GM12878 (cell line): ENCODE measurements at regions of chr19 and their contacts with region 1.

Region 1: DNA sequence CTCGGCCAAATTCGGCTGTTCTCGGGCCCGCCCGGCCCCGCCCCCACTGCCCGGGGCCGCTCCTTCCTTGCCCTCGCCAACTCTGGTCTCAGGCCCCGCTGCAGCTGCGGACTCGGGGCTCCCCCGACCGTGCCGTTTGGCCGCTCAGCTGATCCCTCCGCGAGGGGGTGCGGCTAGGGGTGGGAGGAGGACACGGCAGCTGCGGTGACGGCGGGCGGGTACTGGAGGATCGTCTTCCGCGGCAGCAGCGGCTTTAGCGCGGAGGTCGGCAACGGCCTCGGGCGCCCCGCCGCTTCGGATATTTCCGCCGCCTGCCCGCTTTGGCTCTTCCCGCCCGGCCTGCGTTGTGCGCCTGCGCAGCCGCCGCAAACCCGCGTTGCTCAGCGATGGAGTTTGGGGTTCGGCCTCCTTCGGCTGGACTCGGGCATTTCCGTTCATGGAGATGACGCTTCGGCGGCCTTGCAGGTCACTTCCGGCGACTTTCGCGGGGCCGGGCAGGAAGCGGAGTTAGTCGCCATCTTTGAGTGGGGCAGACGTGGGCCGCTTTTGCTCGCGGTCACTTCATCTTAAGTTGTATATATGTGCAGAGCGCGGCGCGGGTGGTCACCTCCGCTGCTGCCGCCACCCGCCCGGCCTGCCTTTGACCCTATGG is 338 bp upstream of the UBE2M start:
- DNase-seq: peak; percentile 95
- ATAC-seq: peak; percentile 72
- H3K4me3 ChIP-seq: peak overlapping the region; percentile 89
- H3K27ac ChIP-seq: peak overlapping the region; percentile 96
- H3K4me1 ChIP-seq: peaks cover 50% of the 10 kb centered on the region
- H3K27me3 ChIP-seq: no peaks in the 10 kb centered on the region
- CTCF ChIP-seq: no peak
- EP300 ChIP-seq: no peak
- POLR2A ChIP-seq: peak; percentile 83
- RAD21 ChIP-seq: no peak

Region 2: GRCh38 chr19:57719901-57720519 is 838.7 kb before region 1 on chr19:
- CTCF ChIA-PET with region 1: no interaction called
- POLR2A ChIA-PET with region 1: no interaction called
- RAD21 ChIA-PET with region 1: no interaction called
- SMC1A ChIA-PET with region 1: no interaction called
- in situ Hi-C with region 1: no loop called
- intact Hi-C with region 1: no loop called
- DNase-seq: no peak
- ATAC-seq: no peak
- H3K4me3 ChIP-seq: no peak overlapping the region
- H3K27ac ChIP-seq: no peak overlapping the region
- H3K4me1 ChIP-seq: no peaks in the 10 kb centered on the region
- H3K27me3 ChIP-seq: no peaks in the 10 kb centered on the region
- CTCF ChIP-seq: no peak
- EP300 ChIP-seq: no peak
- POLR2A ChIP-seq: no peak
- RAD21 ChIP-seq: no peak

Region 3: GRCh38 chr19:58372311-58373133 is 186.2 kb before region 1 on chr19:
- CTCF ChIA-PET with region 1: no interaction called
- POLR2A ChIA-PET with region 1: no interaction called
- RAD21 ChIA-PET with region 1: no interaction called
- SMC1A ChIA-PET with region 1: no interaction called
- in situ Hi-C with region 1: no loop called
- intact Hi-C with region 1: no loop called
- DNase-seq: no peak
- ATAC-seq: no peak
- H3K4me3 ChIP-seq: no peak overlapping the region
- H3K27ac ChIP-seq: no peak overlapping the region
- H3K4me1 ChIP-seq: no peaks in the 10 kb centered on the region
- H3K27me3 ChIP-seq: no peaks in the 10 kb centered on the region
- CTCF ChIP-seq: 0 out of 6 replicates have a peak, but pooled peaks of 2 of the 3 experiments have one; percentile 5
- EP300 ChIP-seq: no peak
- POLR2A ChIP-seq: no peak
- RAD21 ChIP-seq: no peak

Region 4: DNA sequence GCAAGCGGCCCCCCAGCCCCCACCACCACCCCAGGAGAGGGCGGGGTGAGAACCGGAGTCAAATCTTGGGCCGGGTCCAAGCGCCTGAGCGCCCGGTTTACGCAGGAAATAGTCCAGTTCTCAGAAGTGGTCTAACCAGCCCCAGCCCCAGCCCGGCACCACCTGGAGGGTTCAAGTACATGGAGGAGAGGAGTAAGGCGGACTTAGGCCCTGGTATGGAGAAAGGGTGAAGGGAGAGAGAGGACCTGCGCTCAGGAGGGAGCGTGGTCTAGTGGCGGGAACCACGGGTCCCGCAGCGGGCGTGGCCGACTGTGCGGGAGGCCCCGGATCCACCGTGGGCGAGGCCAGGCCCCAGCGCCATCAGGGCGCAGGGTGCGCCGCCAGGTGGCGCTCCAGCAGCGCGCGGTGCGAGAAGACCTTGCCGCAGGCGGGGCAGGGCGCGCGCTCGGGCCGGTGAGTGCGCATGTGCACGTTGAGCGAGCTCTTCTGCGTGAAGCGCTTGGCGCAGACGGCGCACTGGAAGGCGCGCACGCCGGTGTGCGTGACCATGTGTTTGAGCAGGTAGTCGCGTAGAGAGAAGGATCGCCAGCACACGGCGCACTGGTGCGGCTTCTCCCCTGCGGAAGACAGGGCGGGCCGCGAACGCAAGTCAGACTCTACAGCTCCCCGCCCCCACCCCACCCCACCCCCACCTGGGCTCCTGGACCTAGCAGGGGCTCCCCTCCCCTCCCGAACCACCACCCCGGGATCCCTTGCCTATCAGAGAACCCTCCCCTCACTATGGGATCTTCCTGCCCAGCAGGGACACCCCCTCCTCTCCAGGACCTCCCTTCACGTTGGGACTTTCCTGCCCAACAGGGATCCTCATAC is 44.8 kb before region 1 on chr19:
- CTCF ChIA-PET with region 1: interaction called, 37 read pairs
- POLR2A ChIA-PET with region 1: interaction called, 16 read pairs
- RAD21 ChIA-PET with region 1: interaction called, 4 read pairs
- SMC1A ChIA-PET with region 1: no interaction called
- in situ Hi-C with region 1: no loop called
- intact Hi-C with region 1: loop called (anchors 2 kb)
- DNase-seq: peak; percentile 85
- ATAC-seq: peak; percentile 95
- H3K4me3 ChIP-seq: peak overlapping the region; percentile 72
- H3K27ac ChIP-seq: peak overlapping the region; percentile 91
- H3K4me1 ChIP-seq: peaks cover 23% of the 10 kb centered on the region
- H3K27me3 ChIP-seq: no peaks in the 10 kb centered on the region
- CTCF ChIP-seq: peak; percentile 80 to 99 (median 98); a peak in 5 of 6 replicates
- EP300 ChIP-seq: no peak
- POLR2A ChIP-seq: peak; percentile 88
- RAD21 ChIP-seq: peak; percentile 66

Region 5: DNA sequence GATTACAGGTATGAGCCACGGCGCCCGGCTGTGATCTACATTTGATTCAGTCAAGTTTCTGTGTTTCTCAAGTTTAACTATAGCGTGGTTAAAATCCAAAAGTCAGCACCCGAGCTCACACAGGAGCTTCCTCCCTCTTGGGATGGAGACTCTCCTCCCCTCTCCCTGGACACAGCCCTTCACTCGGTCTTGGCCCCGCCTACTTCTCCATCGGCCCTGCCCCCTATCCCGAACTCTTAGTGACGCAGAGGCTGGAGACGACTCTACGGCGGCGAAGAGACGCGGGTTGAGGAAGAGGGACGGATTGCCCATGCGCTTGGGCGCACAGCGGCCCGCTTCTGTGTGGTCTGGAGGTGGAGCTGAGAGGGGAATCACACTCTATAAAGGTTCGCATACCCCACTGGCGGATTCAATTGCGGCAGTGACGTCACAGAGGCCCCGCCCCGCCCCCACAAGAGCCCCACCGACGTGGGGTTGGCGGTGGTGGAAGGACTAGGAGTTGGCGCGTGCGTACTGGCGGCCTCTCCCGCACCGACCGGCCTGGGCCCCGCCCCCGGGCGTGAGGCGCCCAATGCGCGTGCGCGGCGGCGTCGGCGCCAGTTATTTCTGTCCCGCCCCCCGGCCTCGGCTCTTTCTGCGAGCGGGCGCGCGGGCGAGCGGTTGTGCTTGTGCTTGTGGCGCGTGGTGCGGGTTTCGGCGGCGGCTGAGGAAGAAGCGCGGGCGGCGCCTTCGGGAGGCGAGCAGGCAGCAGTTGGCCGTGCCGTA is 14.7 kb before region 1 on chr19 and contains the start of gene TRIM28:
- CTCF ChIA-PET with region 1: no interaction called
- POLR2A ChIA-PET with region 1: interaction called, 41 read pairs
- RAD21 ChIA-PET with region 1: interaction called, 9 read pairs
- SMC1A ChIA-PET with region 1: interaction called, 9 read pairs
- in situ Hi-C with region 1: no loop called
- intact Hi-C with region 1: loop called (anchors 1 kb)
- DNase-seq: peak; percentile 96
- ATAC-seq: peak; percentile 99
- H3K4me3 ChIP-seq: peak within 1 kb of the TSS; percentile 92
- H3K27ac ChIP-seq: peak within 1 kb of the TSS; percentile 89
- H3K4me1 ChIP-seq: peaks cover 8% of the 10 kb centered on the region
- H3K27me3 ChIP-seq: no peaks in the 10 kb centered on the region; a peak in 1 of 4 replicates
- CTCF ChIP-seq: no peak
- EP300 ChIP-seq: peak in 1 of 2 experiments; percentile 39; a peak in 1 of 4 replicates
- POLR2A ChIP-seq: peak; percentile 99
- RAD21 ChIP-seq: no peak
- polyA plus RNA-seq, gene TRIM28: 5.0 to 32.5 TPM

Region 6: DNA sequence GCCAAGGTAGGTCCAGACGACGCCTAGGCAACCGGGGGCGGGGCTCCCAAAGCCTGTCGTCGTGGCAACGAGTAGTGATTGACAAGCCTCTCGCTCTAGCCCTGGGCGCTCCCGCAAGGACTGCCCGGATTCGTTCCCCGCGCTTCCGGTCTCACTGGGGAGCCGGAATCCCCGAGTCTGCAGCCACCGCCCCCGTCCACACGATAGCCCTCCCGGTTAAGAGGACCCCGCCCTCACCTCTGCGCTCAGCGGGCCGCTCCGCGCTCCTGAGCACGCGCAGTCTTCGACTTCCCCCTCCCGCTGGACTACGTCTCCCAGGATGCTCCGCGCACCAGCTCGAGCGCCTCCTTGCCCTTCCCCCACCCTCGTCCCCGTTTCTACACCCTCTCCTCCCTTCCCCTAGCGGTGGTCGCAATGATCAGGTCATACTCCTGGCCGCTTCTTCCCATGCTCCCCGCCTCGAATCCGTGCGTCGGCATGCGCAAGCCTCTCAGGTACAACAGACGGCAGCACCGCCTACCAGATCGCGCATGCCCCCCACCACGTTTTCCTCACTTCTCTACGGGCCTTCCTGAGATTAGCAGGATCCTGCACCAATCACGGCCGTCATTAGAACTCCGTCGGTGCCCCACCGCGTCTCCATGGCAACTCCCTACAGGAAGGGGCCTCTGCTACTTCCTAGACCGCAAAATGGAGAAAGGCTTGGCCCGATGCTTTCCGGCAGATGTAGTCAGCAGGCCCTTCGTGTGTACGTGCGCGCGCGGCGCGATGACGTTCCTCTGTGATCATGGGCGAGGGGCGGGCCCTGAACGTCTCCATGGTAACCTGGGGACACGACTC is 14.3 kb after region 1 on chr19 and contains the start of gene MZF1:
- CTCF ChIA-PET with region 1: interaction called, 7 read pairs
- POLR2A ChIA-PET with region 1: interaction called, 46 read pairs
- RAD21 ChIA-PET with region 1: interaction called, 5 read pairs
- SMC1A ChIA-PET with region 1: interaction called, 11 read pairs
- in situ Hi-C with region 1: no loop called
- intact Hi-C with region 1: loop called (anchors 1 kb)
- DNase-seq: peak; percentile 99
- ATAC-seq: peak; percentile 73
- H3K4me3 ChIP-seq: peak within 1 kb of the TSS; percentile 82
- H3K27ac ChIP-seq: peak within 1 kb of the TSS; percentile 98
- H3K4me1 ChIP-seq: peaks cover 12% of the 10 kb centered on the region
- H3K27me3 ChIP-seq: no peaks in the 10 kb centered on the region
- CTCF ChIP-seq: 0 out of 6 replicates have a peak, but pooled peaks of 2 of the 3 experiments have one; percentile 10 to 16
- EP300 ChIP-seq: peak in 1 of 2 experiments; percentile 41; a peak in 2 of 4 replicates
- POLR2A ChIP-seq: peak; percentile 84
- RAD21 ChIP-seq: no peak
- polyA plus RNA-seq, gene MZF1: 0.38 to 0.64 TPM

Region 7: GRCh38 chr19:58581227-58582151 is 22.7 kb after region 1 on chr19:
- CTCF ChIA-PET with region 1: interaction called, 5 read pairs
- POLR2A ChIA-PET with region 1: interaction called, 21 read pairs
- RAD21 ChIA-PET with region 1: interaction called, 5 read pairs
- SMC1A ChIA-PET with region 1: interaction called, 10 read pairs
- in situ Hi-C with region 1: no loop called
- intact Hi-C with region 1: no loop called
- DNase-seq: no peak
- ATAC-seq: peak; percentile 91
- H3K4me3 ChIP-seq: no peak overlapping the region
- H3K27ac ChIP-seq: no peak overlapping the region
- H3K4me1 ChIP-seq: peaks cover 20% of the 10 kb centered on the region
- H3K27me3 ChIP-seq: no peaks in the 10 kb centered on the region
- CTCF ChIP-seq: peak; percentile 70 to 99 (median 87)
- EP300 ChIP-seq: no peak
- POLR2A ChIP-seq: no peak
- RAD21 ChIP-seq: no peak